Activated CD4-positive, alpha-beta T cell treated with anti-CD3 and anti-CD28 coated beads for 36 hours (primary cell): ENCODE measurements at regions of chr10 and their contacts with region 1.

Region 1: GRCh38 chr10:47396311-47396729 is 12.2 kb upstream of the ZNF488 start:
- DNase-seq: no peak
- ATAC-seq: peak; percentile 39
- H3K4me3 Mint-ChIP-seq: no peak overlapping the region
- H3K27ac Mint-ChIP-seq: no peak overlapping the region
- H3K4me1 Mint-ChIP-seq: no peaks in the 10 kb centered on the region
- H3K27me3 Mint-ChIP-seq: peaks cover 19% of the 10 kb centered on the region

Region 2: GRCh38 chr10:47013507-47014154 is 382.7 kb before region 1 on chr10:
- CTCF ChIA-PET with region 1: no interaction called
- POLR2A ChIA-PET with region 1: no interaction called
- intact Hi-C with region 1: no loop called
- DNase-seq: no peak
- ATAC-seq: no peak
- H3K4me3 Mint-ChIP-seq: no peak overlapping the region
- H3K27ac Mint-ChIP-seq: no peak overlapping the region
- H3K4me1 Mint-ChIP-seq: no peaks in the 10 kb centered on the region
- H3K27me3 Mint-ChIP-seq: no peaks in the 10 kb centered on the region

Region 3: DNA sequence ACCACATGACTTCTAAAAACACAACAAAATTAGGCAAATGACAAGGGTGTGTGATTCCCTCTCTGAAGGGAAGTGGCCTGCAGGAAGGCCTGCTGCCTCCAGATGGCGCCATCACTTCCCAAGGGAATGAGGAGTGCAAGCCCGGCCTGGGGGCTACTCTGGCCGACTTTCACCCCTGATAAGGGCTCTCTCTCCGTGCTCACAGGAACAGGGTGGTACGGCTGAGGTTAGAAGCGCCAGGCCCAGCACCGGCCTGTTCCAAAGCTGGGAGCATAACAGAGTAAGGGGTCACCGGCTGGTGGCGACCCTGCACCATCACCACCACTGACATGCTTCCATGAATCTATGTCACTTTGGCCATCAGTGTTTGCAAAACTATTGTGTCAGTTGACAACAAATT is 35.0 kb before region 1 on chr10:
- CTCF ChIA-PET with region 1: no interaction called
- POLR2A ChIA-PET with region 1: no interaction called
- intact Hi-C with region 1: no loop called
- DNase-seq: peak; percentile 65
- ATAC-seq: no peak
- H3K4me3 Mint-ChIP-seq: no peak overlapping the region
- H3K27ac Mint-ChIP-seq: no peak overlapping the region
- H3K4me1 Mint-ChIP-seq: no peaks in the 10 kb centered on the region
- H3K27me3 Mint-ChIP-seq: peaks cover 2% of the 10 kb centered on the region

Region 4: DNA sequence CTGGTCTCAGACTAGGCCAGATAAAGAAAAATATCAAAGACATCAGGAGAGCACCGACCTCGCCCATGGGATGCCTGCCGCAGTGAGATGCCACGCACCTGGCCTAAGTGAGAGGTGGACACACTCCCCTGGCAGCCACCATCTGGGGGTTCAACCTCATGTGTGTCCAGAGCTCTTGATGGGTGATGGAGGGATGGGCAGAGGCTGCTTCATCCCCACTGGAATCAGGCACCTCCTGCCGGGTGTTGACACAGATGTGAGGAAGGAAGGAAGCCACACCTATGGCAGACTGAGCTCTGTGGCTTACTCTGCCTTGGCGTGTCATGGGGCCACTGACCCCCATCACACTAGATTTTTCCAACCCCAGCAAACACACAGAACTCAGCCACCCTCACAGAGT is 23.6 kb before region 1 on chr10:
- CTCF ChIA-PET with region 1: no interaction called
- POLR2A ChIA-PET with region 1: no interaction called
- intact Hi-C with region 1: loop called in 1 of 2 experiments (anchors 2 kb)
- DNase-seq: no peak
- ATAC-seq: no peak
- H3K4me3 Mint-ChIP-seq: no peak overlapping the region
- H3K27ac Mint-ChIP-seq: no peak overlapping the region
- H3K4me1 Mint-ChIP-seq: peaks cover 4% of the 10 kb centered on the region
- H3K27me3 Mint-ChIP-seq: peaks cover 18% of the 10 kb centered on the region